Psoas muscle (tissue), 8 donors: ENCODE measurements at regions of chr1 and their contacts with region 1.

Region 1: GRCh38 chr1:229059671-229060539 is 211.0 kb upstream of the RAB4A start:
- DNase-seq: peak in 1 of 2 donors; percentile 40
- ATAC-seq: peak; percentile 32 to 63 (median 54)
- H3K4me3 ChIP-seq: no peak overlapping the region
- H3K27ac ChIP-seq: no peak overlapping the region
- H3K4me1 ChIP-seq: no peaks in the 10 kb centered on the region
- H3K27me3 ChIP-seq: no peaks in the 10 kb centered on the region
- CTCF ChIP-seq: no peak

Region 2: GRCh38 chr1:228964178-228965089 is 95.5 kb before region 1 on chr1:
- intact Hi-C with region 1: no loop called
- DNase-seq: peak in 1 of 2 donors; percentile 44
- ATAC-seq: peak in 2 of 4 donors; percentile 30 to 68
- H3K4me3 ChIP-seq: no peak overlapping the region
- H3K27ac ChIP-seq: peak overlapping the region; percentile 3
- H3K4me1 ChIP-seq: peaks cover 6% of the 10 kb centered on the region
- H3K27me3 ChIP-seq: no peaks in the 10 kb centered on the region
- CTCF ChIP-seq: no peak

Region 3: DNA sequence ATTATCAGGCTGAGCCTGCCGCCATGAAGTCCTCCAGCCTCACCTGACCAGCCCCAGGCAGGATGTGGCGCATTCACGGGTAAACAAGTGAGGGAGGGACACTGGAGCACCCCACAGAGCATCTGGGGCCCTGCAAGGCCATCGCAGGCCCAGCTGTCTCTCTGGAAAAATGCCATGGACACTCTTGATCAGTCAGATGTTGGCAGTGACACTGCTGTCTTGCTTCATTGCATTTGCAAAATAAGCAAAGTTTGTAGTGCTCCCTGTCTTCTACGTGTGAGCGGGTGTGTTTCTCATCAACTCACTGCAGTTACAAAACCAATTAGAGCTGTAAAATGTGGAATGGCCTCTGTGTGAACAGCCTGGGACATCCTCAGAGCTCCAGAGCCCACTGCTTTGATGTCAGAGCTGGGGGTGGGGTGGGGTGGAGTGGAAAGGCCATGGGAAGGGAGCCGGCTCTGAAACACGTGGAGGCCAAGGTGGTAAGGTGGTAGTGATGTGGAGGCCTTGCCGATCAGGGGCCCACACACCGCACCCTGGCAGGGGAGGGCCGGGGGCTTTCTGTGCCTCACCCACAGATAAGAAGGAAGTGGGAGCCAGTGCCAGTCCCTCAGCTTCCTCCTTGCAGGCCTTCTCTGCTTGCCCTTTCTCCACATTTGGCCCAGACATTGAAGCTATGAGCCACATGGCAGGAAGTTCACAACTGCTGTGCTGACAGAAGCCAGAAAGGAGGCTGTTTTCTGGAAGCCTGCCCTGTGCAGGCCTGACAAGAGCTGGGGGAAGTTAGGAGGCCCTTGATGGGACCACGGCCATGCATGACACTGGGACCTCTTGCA is 69.7 kb before region 1 on chr1:
- intact Hi-C with region 1: loop called in 1 of 2 experiments (anchors 10 kb)
- DNase-seq: peak; percentile 65 to 85
- ATAC-seq: peak; percentile 51 to 79 (median 66)
- H3K4me3 ChIP-seq: no peak overlapping the region
- H3K27ac ChIP-seq: peak overlapping the region; percentile 46
- H3K4me1 ChIP-seq: peaks cover 20% of the 10 kb centered on the region
- H3K27me3 ChIP-seq: no peaks in the 10 kb centered on the region
- CTCF ChIP-seq: no peak

Region 4: DNA sequence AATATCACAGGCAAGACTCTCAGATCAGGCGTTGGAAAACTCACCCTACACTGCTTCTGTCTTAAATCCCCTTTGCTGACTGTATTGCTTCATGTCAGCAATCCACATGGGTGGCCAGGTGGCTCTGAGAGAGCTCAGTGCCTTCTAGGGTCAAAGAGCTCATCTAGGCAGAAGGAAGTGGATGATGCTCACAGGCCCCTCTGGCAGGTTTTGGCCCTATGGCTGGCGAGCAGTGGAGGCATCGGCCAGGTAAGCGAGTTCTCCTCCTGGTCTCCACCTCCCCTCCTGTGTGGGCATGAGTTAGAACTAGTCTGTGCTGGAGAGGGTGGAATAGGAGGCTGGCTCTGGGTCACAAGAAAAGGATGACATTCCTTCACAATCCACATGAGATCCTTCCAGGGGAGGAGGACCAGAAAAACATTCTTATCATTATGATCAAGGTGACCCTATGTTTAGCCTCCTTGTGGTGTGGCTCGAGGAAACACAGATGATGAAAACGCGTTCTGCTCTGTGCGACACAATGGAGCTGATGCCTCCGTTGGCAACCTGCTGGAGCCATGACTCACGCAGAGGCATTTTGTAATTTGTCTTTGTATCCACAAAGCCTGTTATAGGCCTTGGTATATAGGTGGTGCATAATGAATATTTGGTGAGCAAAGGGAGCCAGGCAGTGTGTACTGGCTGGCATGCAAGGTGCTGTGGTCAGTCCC is 53.6 kb before region 1 on chr1:
- intact Hi-C with region 1: no loop called
- DNase-seq: no peak
- ATAC-seq: no peak
- H3K4me3 ChIP-seq: no peak overlapping the region
- H3K27ac ChIP-seq: no peak overlapping the region
- H3K4me1 ChIP-seq: no peaks in the 10 kb centered on the region
- H3K27me3 ChIP-seq: no peaks in the 10 kb centered on the region
- CTCF ChIP-seq: no peak